ENCODE measurements at regions of chr3 and their contacts with region 1.

Region 1: DNA sequence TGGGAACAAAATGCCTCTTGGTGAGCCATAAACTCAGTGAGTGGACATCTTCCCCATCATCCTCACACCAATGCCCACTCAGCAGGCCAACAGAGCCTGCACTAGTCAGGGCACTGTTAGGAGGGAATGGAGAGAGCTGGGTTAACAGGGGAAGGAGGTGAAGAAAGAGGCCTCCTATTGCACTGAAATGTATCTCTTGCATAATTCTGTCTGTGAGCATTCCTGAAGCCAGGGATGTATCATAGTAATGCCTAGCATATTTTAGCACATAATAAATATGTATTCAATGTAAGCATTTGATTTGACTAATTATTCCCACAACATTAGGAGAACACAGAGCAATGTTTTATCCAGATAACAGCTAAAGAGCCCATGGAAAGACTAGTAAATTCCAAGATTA is 81.2 kb downstream of the ANO10 start:
- DNase-seq: peak; percentile 17
- H3K4me3 Mint-ChIP-seq: no peak overlapping the region
- H3K27ac Mint-ChIP-seq: no peak overlapping the region
- H3K4me1 Mint-ChIP-seq: peaks cover 8% of the 10 kb centered on the region
- H3K27me3 Mint-ChIP-seq: no peaks in the 10 kb centered on the region
- CTCF ChIP-seq: no peak

Region 2: GRCh38 chr3:43468133-43468532 is 72.5 kb before region 1 on chr3:
- CTCF ChIA-PET with region 1: no interaction called
- POLR2A ChIA-PET with region 1: no interaction called
- intact Hi-C with region 1: no loop called
- DNase-seq: no peak
- H3K4me3 Mint-ChIP-seq: no peak overlapping the region
- H3K27ac Mint-ChIP-seq: no peak overlapping the region
- H3K4me1 Mint-ChIP-seq: no peaks in the 10 kb centered on the region
- H3K27me3 Mint-ChIP-seq: no peaks in the 10 kb centered on the region
- CTCF ChIP-seq: no peak

Region 3: GRCh38 chr3:43559963-43560362 is 19.3 kb after region 1 on chr3:
- CTCF ChIA-PET with region 1: interaction called, 17 read pairs
- POLR2A ChIA-PET with region 1: no interaction called
- intact Hi-C with region 1: no loop called
- DNase-seq: no peak
- H3K4me3 Mint-ChIP-seq: no peak overlapping the region
- H3K27ac Mint-ChIP-seq: no peak overlapping the region
- H3K4me1 Mint-ChIP-seq: no peaks in the 10 kb centered on the region
- H3K27me3 Mint-ChIP-seq: no peaks in the 10 kb centered on the region
- CTCF ChIP-seq: no peak

Region 4: DNA sequence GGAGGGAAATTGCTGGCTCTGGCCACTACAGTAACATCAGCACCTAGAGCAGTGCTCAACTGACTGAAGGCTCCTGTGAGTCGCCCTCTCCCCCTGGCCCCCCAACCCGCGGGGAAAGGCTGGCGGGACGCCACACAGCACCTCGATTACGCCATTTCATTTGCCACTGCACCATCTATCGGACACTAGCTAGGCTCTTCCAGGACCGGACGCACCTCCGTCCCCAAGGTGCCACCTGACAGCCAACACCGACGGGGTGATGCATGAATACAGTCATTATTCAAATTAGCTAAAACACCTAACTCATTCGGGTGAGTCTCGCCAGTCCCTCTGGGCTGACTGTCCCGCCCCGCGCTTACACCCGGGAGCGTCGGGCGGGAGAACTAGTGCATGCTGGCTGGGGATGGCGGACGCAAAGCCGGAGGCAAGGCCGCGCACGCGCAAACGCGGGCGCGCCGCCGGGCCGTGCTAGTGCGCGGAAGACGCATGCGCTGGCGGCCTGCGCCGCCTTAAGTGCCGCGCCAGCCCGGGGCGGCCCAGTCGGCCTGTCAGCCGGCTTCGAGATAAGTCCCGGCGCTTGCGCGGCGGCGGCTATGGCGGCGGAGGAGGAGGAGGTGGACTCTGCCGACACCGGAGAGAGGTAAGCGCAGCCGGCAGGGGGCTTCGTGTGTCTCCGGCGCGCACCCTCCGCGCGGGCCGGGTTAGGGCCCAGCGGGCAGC is 149.9 kb after region 1 on chr3 and contains the start of gene ABHD5:
- CTCF ChIA-PET with region 1: interaction called, 3 read pairs
- POLR2A ChIA-PET with region 1: interaction called, 3 read pairs
- intact Hi-C with region 1: loop called (anchors 1 kb)
- DNase-seq: peak; percentile 93
- H3K4me3 Mint-ChIP-seq: peak within 1 kb of the TSS; percentile 90
- H3K27ac Mint-ChIP-seq: peak within 1 kb of the TSS; percentile 88
- H3K4me1 Mint-ChIP-seq: peaks cover 41% of the 10 kb centered on the region
- H3K27me3 Mint-ChIP-seq: no peaks in the 10 kb centered on the region
- CTCF ChIP-seq: peak; percentile 17
- total RNA-seq, gene ABHD5: 30.3 and 32.6 TPM in 2 replicates

Region 5: DNA sequence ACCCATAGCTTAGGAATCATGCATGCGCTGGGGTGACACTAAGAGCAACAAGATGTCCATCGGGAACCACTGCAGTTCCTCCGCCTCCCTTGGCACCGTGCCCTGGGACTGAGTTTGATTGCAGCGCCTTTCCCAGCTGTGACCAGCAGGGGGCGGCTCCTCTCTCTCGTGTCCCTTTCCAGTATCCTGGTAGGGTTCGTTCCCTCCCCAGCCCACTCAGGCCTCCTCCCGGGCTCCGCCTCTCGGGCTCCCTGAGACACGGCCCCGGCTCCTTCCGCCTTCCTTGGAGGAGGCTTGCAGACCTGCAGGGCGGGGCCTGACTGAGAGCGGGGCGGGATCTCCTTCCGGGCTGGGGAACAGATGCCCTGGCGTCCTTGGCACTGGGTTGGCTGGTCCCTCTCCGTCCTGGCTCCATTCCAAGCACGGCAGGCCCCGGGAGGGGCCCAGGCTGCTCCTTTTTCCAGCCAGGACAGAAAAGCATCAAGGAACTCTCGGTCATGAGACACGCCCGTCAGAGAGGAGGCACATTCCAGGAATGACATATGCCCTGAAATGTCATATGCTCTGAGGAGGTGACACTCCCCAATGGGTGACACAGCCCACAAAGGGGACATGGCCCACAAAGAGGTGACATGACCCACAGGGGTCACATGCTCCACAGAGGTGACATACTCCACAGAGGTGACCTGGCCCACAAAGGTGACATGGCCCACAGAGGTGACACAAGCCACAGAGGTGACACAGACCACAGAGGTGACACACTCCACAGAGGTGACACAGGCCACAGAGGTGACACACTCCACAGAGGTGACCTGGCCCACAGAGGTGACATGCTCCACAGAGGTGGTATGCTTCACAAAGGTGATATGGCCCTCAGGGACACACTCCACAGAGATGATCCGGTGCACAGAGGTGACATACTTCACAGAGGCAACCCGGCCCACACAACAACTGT is 229.1 kb after region 1 on chr3:
- CTCF ChIA-PET with region 1: no interaction called
- POLR2A ChIA-PET with region 1: no interaction called
- intact Hi-C with region 1: loop called (anchors 5 kb)
- DNase-seq: peak; percentile 98
- H3K4me3 Mint-ChIP-seq: peak overlapping the region; percentile 58
- H3K27ac Mint-ChIP-seq: no peak overlapping the region
- H3K4me1 Mint-ChIP-seq: peaks cover 56% of the 10 kb centered on the region
- H3K27me3 Mint-ChIP-seq: no peaks in the 10 kb centered on the region
- CTCF ChIP-seq: peak; percentile 93

Region 6: DNA sequence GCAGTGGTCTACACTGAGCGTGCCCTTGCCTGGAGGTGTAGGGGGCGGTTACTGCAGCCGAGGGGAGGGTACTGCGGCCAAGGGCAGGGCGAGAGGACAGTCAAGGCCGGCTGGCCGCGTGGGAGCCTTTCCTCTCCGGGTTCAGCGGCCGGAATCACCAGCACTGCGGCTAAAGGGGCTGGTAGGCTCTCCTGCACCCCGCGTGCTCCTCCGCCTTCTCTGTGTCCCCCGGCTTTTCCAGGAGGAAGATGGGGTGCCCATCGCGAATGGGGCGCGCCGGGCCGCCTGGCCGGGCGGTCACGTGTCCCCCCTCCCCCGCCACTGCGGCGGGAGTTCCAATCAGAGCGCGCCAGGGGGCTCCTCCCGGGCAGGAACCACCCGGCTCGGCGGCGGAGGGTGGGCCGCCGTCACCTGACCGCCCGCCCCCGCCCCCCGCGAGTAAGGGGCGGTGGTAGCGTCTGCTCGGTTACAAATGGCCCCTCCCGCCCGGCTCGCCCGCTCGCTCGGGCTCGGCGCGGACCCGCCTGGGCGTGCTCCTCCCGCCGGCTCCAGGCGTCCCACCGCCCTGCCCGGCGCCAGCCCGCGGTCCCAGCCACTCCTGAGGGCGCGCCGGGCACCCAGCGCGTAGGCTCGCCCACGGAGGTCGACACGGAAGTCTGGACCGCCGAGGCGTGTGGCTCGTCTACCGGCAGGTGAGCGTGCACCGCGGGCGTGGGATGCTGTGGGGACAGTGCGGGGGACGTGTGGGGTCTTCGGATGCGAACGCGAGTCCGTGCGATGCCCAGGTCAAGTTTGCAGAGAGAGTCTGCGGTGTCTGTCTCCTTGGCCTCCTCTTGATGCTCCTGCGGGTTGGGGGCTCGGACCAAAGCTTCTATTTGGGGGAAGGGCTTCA is 458.5 kb after region 1 on chr3:
- CTCF ChIA-PET with region 1: no interaction called
- POLR2A ChIA-PET with region 1: no interaction called
- intact Hi-C with region 1: loop called (anchors 5 kb)
- DNase-seq: peak; percentile 69
- H3K4me3 Mint-ChIP-seq: peak overlapping the region; percentile 75
- H3K27ac Mint-ChIP-seq: no peak overlapping the region
- H3K4me1 Mint-ChIP-seq: peaks cover 29% of the 10 kb centered on the region
- H3K27me3 Mint-ChIP-seq: peaks cover 32% of the 10 kb centered on the region
- CTCF ChIP-seq: no peak

Region 7: GRCh38 chr3:44235604-44236484 is 695.2 kb after region 1 on chr3:
- CTCF ChIA-PET with region 1: interaction called, 12 read pairs
- POLR2A ChIA-PET with region 1: interaction called, 3 read pairs
- intact Hi-C with region 1: loop called (anchors 1 kb)
- DNase-seq: peak; percentile 88
- H3K4me3 Mint-ChIP-seq: no peak overlapping the region
- H3K27ac Mint-ChIP-seq: no peak overlapping the region
- H3K4me1 Mint-ChIP-seq: peaks cover 6% of the 10 kb centered on the region
- H3K27me3 Mint-ChIP-seq: no peaks in the 10 kb centered on the region
- CTCF ChIP-seq: peak; percentile 51